ENCODE measurements at regions of chr13 and their contacts with region 1.

Region 1: DNA sequence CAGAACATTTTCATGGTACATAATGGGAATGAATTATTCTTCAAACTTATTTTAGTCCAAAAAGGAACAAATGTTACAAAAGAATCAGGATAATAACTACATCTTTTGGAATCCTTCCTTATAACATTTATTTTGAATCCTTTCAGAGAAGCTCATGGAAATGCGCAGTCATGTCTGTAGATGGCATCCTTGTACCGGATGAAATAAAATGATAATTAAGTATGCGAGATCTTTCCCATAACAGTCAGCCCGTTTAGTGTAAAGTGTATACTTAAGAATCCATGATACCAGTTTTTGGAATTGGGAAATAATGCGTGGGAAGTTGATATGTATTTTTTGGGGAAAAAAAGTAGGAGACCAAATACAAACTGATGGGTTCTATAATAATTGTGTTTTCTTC is 418.8 kb downstream of the GPC5 start:
- DNase-seq: peak in 1 of 2 experiments; percentile 5
- H3K4me3 ChIP-seq: no peak overlapping the region
- H3K4me3 Mint-ChIP-seq: no peak overlapping the region
- H3K27ac Mint-ChIP-seq: no peak overlapping the region
- H3K4me1 ChIP-seq: no peaks in the 10 kb centered on the region
- H3K4me1 Mint-ChIP-seq: no peaks in the 10 kb centered on the region
- H3K27me3 ChIP-seq: no peaks in the 10 kb centered on the region
- H3K27me3 Mint-ChIP-seq: peaks cover 8% of the 10 kb centered on the region
- CTCF ChIP-seq: peak in 1 of 2 experiments; percentile 9

Region 2: DNA sequence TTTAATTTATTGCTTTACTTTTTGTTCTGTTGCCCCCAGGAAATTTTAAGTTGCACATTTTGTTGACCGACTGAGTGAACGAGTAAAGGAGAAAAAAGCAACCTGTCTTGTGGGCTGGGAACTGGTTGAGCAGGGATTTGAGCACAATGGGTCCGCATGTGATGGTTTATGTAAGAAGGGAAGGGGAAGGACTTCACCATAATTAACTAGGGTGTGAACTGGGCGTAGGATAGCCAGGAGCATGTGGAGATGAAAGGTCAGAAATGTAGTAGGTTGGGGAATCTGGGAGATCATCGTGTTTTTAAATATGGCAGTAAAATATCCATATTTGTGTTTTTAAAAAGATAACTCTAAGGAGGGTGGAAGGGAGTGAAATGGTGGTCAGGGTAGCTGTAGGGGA is 319.0 kb before region 1 on chr13:
- CTCF ChIA-PET with region 1: no interaction called
- POLR2A ChIA-PET with region 1: no interaction called
- intact Hi-C with region 1: no loop called
- DNase-seq: no peak
- H3K4me3 ChIP-seq: no peak overlapping the region
- H3K4me3 Mint-ChIP-seq: no peak overlapping the region
- H3K27ac Mint-ChIP-seq: no peak overlapping the region
- H3K4me1 ChIP-seq: no peaks in the 10 kb centered on the region
- H3K4me1 Mint-ChIP-seq: peaks cover 6% of the 10 kb centered on the region
- H3K27me3 ChIP-seq: no peaks in the 10 kb centered on the region
- H3K27me3 Mint-ChIP-seq: no peaks in the 10 kb centered on the region
- CTCF ChIP-seq: no peak

Region 3: GRCh38 chr13:91922969-91923592 is 105.8 kb after region 1 on chr13:
- CTCF ChIA-PET with region 1: no interaction called
- POLR2A ChIA-PET with region 1: no interaction called
- intact Hi-C with region 1: loop called (anchors 5 kb)
- DNase-seq: no peak
- H3K4me3 ChIP-seq: no peak overlapping the region
- H3K4me3 Mint-ChIP-seq: no peak overlapping the region
- H3K27ac Mint-ChIP-seq: no peak overlapping the region
- H3K4me1 ChIP-seq: no peaks in the 10 kb centered on the region
- H3K4me1 Mint-ChIP-seq: no peaks in the 10 kb centered on the region
- H3K27me3 ChIP-seq: no peaks in the 10 kb centered on the region
- H3K27me3 Mint-ChIP-seq: peaks cover 18% of the 10 kb centered on the region
- CTCF ChIP-seq: peak; percentile 42

Region 4: DNA sequence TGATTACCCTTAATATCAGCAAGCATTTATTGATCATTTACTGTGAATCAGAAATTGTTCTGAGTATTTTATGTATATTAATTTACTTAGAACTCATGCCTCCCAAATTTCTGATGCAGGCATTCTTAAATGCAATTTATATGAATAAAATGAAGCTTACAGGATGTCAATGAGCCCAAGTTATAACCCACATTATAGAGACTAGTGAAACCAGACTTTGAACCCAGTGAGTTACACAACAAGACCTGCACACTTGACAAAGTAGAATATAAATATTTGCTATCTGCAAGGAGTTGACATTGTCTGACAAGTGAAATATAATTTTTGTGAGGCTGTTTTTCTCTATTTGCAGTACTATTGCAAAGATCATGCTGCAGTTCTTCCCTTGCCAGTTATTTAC is 237.1 kb after region 1 on chr13:
- CTCF ChIA-PET with region 1: no interaction called
- POLR2A ChIA-PET with region 1: no interaction called
- intact Hi-C with region 1: no loop called
- DNase-seq: peak in 1 of 2 experiments; percentile 56
- H3K4me3 ChIP-seq: no peak overlapping the region
- H3K4me3 Mint-ChIP-seq: no peak overlapping the region
- H3K27ac Mint-ChIP-seq: no peak overlapping the region
- H3K4me1 ChIP-seq: peaks cover 11% of the 10 kb centered on the region
- H3K4me1 Mint-ChIP-seq: peaks cover 6% of the 10 kb centered on the region
- H3K27me3 ChIP-seq: no peaks in the 10 kb centered on the region
- H3K27me3 Mint-ChIP-seq: no peaks in the 10 kb centered on the region
- CTCF ChIP-seq: no peak

Region 5: DNA sequence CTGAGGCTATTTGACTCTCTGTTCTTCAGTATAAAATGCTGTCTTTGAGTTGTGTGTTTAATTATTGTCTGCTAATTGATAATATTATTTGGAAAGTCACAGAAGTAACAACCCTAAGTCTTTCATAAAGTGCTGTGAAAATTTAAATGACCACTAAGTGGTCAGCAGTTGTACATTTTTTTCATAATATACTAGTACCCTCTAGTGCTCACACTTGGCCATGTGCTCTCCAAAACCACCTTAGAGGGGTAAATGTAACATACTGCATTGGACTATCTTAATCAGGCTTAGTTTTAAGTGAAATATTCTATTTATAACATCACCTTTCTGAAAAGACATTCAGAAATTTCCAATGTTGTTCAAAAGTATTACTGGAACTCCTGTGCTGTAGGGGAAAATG is 326.5 kb after region 1 on chr13:
- CTCF ChIA-PET with region 1: no interaction called
- POLR2A ChIA-PET with region 1: no interaction called
- intact Hi-C with region 1: loop called (anchors 1 kb)
- DNase-seq: peak in 1 of 2 experiments; percentile 22
- H3K4me3 ChIP-seq: no peak overlapping the region
- H3K4me3 Mint-ChIP-seq: no peak overlapping the region
- H3K27ac Mint-ChIP-seq: no peak overlapping the region
- H3K4me1 ChIP-seq: no peaks in the 10 kb centered on the region
- H3K4me1 Mint-ChIP-seq: no peaks in the 10 kb centered on the region
- H3K27me3 ChIP-seq: no peaks in the 10 kb centered on the region
- H3K27me3 Mint-ChIP-seq: no peaks in the 10 kb centered on the region
- CTCF ChIP-seq: peak in 1 of 2 experiments; percentile 43

Measured in Caco-2 (cell line).